Activated CD4-positive, alpha-beta T cell treated with anti-CD3 and anti-CD28 coated beads, Interleukin-2, amount 10 ng/mL, durations not matched to agents 24 days and 14 days (primary cell): ENCODE measurements at regions of chr6 and their contacts with region 1.

Region 1: DNA sequence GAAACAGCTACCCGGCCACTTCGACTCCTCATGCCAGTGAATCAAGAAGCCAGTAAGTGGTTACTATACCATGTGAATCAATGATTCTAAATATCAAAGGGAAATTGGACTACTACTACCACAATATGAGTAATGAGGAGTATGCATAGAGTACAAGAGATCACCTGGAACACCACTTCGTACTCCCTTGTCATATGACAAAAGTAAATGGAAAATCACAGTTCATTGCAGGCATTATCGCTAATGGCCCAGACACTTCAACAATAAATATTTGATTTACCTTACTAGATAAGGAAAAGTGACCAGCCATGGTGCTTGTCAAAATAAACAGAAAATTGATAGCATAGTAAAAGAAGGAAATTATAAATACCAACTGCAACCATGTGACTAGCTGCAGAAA is 73.1 kb downstream of the BMP5 start:
- DNase-seq: no peak
- H3K4me3 Mint-ChIP-seq: no peak overlapping the region
- H3K27ac Mint-ChIP-seq: no peak overlapping the region
- H3K4me1 Mint-ChIP-seq: no peaks in the 10 kb centered on the region
- H3K27me3 Mint-ChIP-seq: no peaks in the 10 kb centered on the region

Region 2: GRCh38 chr6:55778705-55779104 is 23.6 kb before region 1 on chr6:
- intact Hi-C with region 1: loop called (anchors 2 kb)
- DNase-seq: no peak
- H3K4me3 Mint-ChIP-seq: no peak overlapping the region
- H3K27ac Mint-ChIP-seq: no peak overlapping the region
- H3K4me1 Mint-ChIP-seq: no peaks in the 10 kb centered on the region
- H3K27me3 Mint-ChIP-seq: no peaks in the 10 kb centered on the region